ENCODE measurements at regions of chr3 and their contacts with region 1.

Region 1: DNA sequence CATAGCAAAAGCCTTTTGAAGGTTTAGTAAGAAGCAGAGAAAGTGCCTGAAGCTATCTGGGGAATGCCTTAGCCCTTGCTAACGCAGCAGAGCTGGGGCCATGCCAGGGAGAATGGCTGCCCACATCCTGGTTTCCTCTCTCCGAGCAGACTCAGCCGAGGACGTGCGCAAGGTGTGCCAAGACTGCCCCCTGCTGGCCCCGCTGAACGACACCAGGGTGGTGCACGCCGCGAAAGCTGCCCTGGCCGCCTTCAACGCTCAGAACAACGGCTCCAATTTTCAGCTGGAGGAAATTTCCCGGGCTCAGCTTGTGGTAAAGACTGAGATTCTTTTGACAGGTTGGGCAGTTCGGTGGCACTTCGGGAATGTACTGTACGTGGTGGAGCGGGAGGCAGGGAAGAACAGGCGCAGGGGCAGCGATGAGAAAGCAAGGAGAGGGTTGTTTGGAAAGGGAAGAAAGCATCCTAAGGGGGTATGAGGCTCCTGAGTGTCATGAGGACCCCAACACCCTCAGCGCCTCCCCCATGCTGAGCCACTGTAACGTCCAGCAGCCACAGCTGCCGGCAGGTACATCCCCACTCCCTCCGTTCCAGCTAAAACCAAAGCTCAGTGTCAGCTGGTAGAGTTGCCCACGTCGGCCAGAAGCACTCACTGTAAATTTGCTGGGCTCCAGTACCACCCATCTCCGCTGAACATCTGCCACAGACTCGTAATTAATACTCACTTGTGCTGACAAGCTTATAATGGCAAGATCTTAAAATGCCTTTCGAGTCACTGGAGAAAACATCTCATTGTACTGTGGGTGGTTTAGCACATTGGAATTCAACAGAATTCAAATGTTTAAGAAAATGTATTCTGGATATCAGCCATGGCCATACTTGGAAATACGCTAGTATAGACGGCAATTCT is 4.4 kb downstream of the AHSG start:
- DNase-seq: peak; percentile 89
- ATAC-seq: peak; percentile 98
- H3K4me3 Mint-ChIP-seq: peak overlapping the region; percentile 26
- H3K27ac Mint-ChIP-seq: no peak overlapping the region
- H3K4me1 Mint-ChIP-seq: peaks cover 21% of the 10 kb centered on the region
- H3K27me3 Mint-ChIP-seq: peaks cover 50% of the 10 kb centered on the region

Region 2: DNA sequence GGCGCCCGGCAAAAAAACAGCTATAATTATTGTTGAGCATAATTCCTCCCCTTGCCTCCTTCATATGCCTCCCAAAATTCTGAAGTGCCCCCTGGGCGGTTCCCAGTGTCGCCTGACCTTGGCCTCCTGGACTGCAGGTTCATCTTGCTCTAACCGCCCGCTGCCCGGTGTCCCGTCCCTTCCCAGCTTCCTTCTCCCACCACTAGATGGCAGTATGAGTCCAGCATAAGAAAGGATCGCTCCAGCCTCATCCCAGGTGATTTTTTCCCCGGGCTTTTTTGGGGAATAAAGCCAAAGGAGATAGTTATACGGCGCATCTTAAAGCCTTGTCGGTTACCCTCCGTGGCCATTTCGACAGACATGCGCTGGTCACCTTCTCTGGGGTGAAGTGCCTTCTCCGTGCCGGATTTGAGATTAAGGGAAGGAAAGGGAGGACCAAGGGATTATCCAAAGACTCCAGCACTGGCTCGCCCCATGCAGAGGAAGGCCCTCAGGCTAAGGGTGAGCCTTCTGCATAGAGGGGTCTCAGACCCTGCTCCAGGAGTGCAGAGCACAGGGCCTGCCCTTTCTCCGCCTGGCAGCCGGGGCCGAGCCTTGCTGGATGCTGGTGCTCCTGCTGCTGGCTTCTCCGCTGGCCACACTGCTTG is 633.7 kb before region 1 on chr3:
- CTCF ChIA-PET with region 1: interaction called, 12 read pairs
- DNase-seq: peak; percentile 61
- ATAC-seq: peak; percentile 78
- H3K4me3 Mint-ChIP-seq: no peak overlapping the region
- H3K27ac Mint-ChIP-seq: no peak overlapping the region
- H3K4me1 Mint-ChIP-seq: peaks cover 3% of the 10 kb centered on the region
- H3K27me3 Mint-ChIP-seq: peaks cover 34% of the 10 kb centered on the region

Region 3: GRCh38 chr3:186432189-186432588 is 185.1 kb before region 1 on chr3:
- CTCF ChIA-PET with region 1: no interaction called
- DNase-seq: no peak
- ATAC-seq: no peak
- H3K4me3 Mint-ChIP-seq: no peak overlapping the region
- H3K27ac Mint-ChIP-seq: no peak overlapping the region
- H3K4me1 Mint-ChIP-seq: no peaks in the 10 kb centered on the region
- H3K27me3 Mint-ChIP-seq: peaks cover 17% of the 10 kb centered on the region

Region 4: GRCh38 chr3:186549497-186549896 is 67.8 kb before region 1 on chr3:
- CTCF ChIA-PET with region 1: interaction called, 11 read pairs
- DNase-seq: no peak
- ATAC-seq: no peak
- H3K4me3 Mint-ChIP-seq: no peak overlapping the region
- H3K27ac Mint-ChIP-seq: no peak overlapping the region
- H3K4me1 Mint-ChIP-seq: no peaks in the 10 kb centered on the region
- H3K27me3 Mint-ChIP-seq: no peaks in the 10 kb centered on the region

Region 5: DNA sequence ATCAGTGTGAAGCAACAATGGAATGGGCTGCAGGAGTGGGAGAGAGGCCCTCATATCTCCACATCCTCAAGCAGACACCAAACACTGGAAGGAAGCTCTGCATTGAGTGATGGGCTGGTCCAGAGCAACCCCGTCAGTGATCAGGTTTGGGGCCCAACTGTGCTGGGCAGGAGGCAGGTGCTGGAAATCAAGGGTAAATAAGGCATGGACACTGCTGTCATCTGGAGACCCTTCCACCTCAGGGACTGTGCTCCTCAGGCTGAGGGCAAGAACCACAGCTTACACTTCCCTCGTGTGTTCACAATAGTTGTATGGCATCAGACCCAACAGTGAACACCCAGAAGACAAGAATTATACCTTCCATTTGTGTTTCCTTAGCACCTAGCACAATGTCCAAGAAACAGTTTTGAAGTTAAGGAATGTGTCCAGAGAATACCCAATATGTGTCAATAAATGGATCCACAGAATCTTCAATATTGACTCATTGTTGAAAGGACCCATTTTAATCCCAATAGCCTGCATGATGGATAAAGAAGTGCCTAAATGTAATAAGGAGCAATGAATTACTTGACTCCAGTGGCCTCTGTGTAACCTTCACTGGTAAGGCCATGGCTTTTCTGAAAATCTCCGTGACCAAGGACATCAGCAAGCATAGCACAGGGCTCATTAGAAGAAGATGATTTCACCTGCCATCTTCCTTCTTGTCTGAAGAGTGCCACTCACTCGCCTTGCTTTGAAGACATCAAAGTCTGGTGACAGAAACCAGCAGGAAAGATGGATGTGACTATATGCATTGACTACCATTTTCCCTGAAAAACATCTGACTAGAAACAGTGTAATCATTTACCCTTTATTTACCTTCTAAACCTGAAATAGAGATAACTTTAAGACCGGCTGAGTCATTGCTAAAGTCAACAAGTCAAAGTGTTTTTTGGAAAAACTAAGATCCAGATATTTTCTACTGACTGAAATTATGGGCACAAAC is 11.4 kb before region 1 on chr3:
- CTCF ChIA-PET with region 1: interaction called, 20 read pairs
- DNase-seq: no peak
- ATAC-seq: no peak
- H3K4me3 Mint-ChIP-seq: no peak overlapping the region
- H3K27ac Mint-ChIP-seq: no peak overlapping the region
- H3K4me1 Mint-ChIP-seq: no peaks in the 10 kb centered on the region
- H3K27me3 Mint-ChIP-seq: peaks cover 4% of the 10 kb centered on the region

Region 6: GRCh38 chr3:186783073-186783730 is 165.9 kb after region 1 on chr3 and contains the start of gene EIF4A2:
- CTCF ChIA-PET with region 1: interaction called, 24 read pairs
- DNase-seq: peak; percentile 93
- ATAC-seq: peak; percentile 71
- H3K4me3 Mint-ChIP-seq: peak within 1 kb of the TSS; percentile 100
- H3K27ac Mint-ChIP-seq: peak within 1 kb of the TSS; percentile 100
- H3K4me1 Mint-ChIP-seq: peaks cover 39% of the 10 kb centered on the region
- H3K27me3 Mint-ChIP-seq: peaks cover 2% of the 10 kb centered on the region
- total RNA-seq, gene EIF4A2: 374 to 441 TPM

Region 7: GRCh38 chr3:186826976-186827731 is 209.9 kb after region 1 on chr3:
- CTCF ChIA-PET with region 1: interaction called, 106 read pairs
- DNase-seq: peak; percentile 89
- ATAC-seq: peak; percentile 96
- H3K4me3 Mint-ChIP-seq: peak overlapping the region; percentile 72
- H3K27ac Mint-ChIP-seq: peak overlapping the region; percentile 54
- H3K4me1 Mint-ChIP-seq: peaks cover 28% of the 10 kb centered on the region
- H3K27me3 Mint-ChIP-seq: peaks cover 43% of the 10 kb centered on the region

Measured in activated CD8-positive, alpha-beta memory T cell treated with anti-CD3 and anti-CD28 coated beads, Interleukin-2, amount 10 ng/mL, durations not matched to agents 7 days and 5 days (primary cell).